ENCODE measurements at regions of chr6 and their contacts with region 1.

Region 1: GRCh38 chr6:28496099-28496779 is 19.4 kb downstream of the GPX6 start:
- DNase-seq: peak in 2 of 9 donors; percentile 17 to 25
- ATAC-seq: no peak
- H3K4me3 ChIP-seq: no peak overlapping the region
- H3K4me3 Mint-ChIP-seq: no peak overlapping the region
- H3K27ac ChIP-seq: no peak overlapping the region
- H3K27ac Mint-ChIP-seq: no peak overlapping the region
- H3K4me1 ChIP-seq: no peaks in the 10 kb centered on the region
- H3K4me1 Mint-ChIP-seq: peaks cover 0 to 8% (median 0%) of the 10 kb centered on the region in 7 donors
- H3K27me3 ChIP-seq: no peaks in the 10 kb centered on the region
- H3K27me3 Mint-ChIP-seq: peaks cover 9 to 52% (median 43%) of the 10 kb centered on the region in 5 donors

Region 2: DNA sequence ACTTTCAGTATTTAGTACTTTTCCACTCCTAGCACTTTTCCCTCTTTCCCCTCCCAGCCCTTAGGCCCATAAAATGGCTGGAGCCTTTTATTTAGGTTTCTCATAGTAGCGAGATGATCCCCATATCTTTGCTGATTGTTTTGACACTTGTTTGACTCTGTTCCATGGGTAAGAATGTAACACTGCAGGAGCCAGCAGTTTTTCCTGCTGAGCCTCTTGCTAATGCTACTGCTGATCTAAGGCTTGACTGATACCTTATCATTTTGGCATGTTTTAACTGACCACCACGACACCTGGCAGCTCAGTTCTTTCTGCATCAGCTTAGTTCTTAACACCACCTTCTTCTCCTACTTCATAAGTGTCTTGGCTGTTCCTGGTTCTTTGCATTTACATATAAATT is 325.0 kb before region 1 on chr6:
- CTCF ChIA-PET with region 1: no interaction called
- POLR2A ChIA-PET with region 1: no interaction called
- intact Hi-C with region 1: no loop called
- DNase-seq: no peak
- ATAC-seq: no peak
- H3K4me3 ChIP-seq: no peak overlapping the region
- H3K4me3 Mint-ChIP-seq: no peak overlapping the region
- H3K27ac ChIP-seq: no peak overlapping the region
- H3K27ac Mint-ChIP-seq: no peak overlapping the region
- H3K4me1 ChIP-seq: no peaks in the 10 kb centered on the region
- H3K4me1 Mint-ChIP-seq: no peaks in the 10 kb centered on the region
- H3K27me3 ChIP-seq: no peaks in the 10 kb centered on the region
- H3K27me3 Mint-ChIP-seq: peaks cover 7 to 31% (median 22%) of the 10 kb centered on the region in 5 donors

Region 3: DNA sequence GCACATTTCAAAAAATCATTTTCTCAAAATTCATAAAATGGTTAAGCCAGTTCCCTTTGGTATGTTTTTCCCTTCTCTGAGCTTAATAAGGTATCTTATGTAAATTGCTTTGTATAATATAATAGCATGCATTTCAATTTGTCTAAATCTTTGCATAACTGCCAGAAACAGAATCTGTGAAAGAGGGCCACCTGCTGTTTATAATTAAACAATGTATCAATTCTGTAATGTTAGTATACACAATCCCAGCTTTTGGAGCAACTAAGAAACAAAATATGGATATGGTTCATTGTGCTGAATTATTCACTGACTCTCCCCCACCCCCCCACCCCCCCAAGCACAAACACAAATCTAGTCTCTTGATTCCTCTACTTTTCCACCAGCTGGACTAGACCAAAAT is 84.2 kb after region 1 on chr6:
- CTCF ChIA-PET with region 1: interaction called, 20 read pairs
- POLR2A ChIA-PET with region 1: no interaction called
- intact Hi-C with region 1: loop called in 1 of 2 experiments (anchors 1 kb)
- DNase-seq: peak in 2 of 9 donors; percentile 16 to 24
- ATAC-seq: no peak
- H3K4me3 ChIP-seq: no peak overlapping the region
- H3K4me3 Mint-ChIP-seq: no peak overlapping the region
- H3K27ac ChIP-seq: no peak overlapping the region
- H3K27ac Mint-ChIP-seq: no peak overlapping the region
- H3K4me1 ChIP-seq: no peaks in the 10 kb centered on the region
- H3K4me1 Mint-ChIP-seq: no peaks in the 10 kb centered on the region
- H3K27me3 ChIP-seq: no peaks in the 10 kb centered on the region
- H3K27me3 Mint-ChIP-seq: peaks cover 0 to 43% (median 25%) of the 10 kb centered on the region in 5 donors

Measured in naive thymus-derived CD4-positive, alpha-beta T cell (primary cell).